ENCODE measurements at regions of chr18 and their contacts with region 1.

Region 1: GRCh38 chr18:63439334-63439733 is 17.1 kb upstream of the VPS4B start:
- DNase-seq: peak; percentile 72
- ATAC-seq: peak; percentile 78
- H3K4me3 ChIP-seq: no peak overlapping the region
- H3K4me3 Mint-ChIP-seq: no peak overlapping the region
- H3K27ac ChIP-seq: no peak overlapping the region
- H3K27ac Mint-ChIP-seq: no peak overlapping the region
- H3K4me1 ChIP-seq: peaks cover 2 to 5% of the 10 kb centered on the region in 2 donors
- H3K4me1 Mint-ChIP-seq: peaks cover 5% of the 10 kb centered on the region
- H3K27me3 ChIP-seq: no peaks in the 10 kb centered on the region
- H3K27me3 Mint-ChIP-seq: peaks cover 16% of the 10 kb centered on the region
- CTCF ChIP-seq: peak; percentile 94

Region 2: DNA sequence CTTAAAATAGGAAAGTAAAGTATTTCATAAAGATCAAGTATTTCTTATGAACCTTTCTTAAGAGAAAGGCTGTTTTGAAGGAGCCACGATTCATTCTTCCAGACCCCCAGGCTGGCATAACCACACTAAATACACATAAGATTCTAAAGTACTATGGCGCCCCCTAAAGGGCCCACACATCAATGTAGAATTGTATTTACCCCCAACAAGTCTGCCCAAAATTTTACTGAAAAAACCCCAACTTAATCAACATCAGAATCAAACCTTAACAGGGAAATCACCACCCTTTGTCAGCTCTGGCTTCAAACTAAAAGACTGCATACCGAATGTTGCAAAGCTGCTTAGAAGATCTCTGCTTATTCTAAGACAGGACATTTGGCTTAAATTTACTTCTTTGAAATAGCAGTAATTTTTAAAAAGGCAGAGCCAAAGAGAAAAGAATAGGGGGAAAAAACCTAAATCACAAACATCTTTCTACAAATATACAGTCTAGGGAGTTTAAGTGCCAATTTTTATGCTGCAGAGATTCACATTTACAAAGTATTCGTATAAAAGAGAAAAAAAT is 99.3 kb before region 1 on chr18:
- CTCF ChIA-PET with region 1: interaction called, 90 read pairs
- POLR2A ChIA-PET with region 1: no interaction called
- intact Hi-C with region 1: loop called (anchors 1 kb)
- DNase-seq: peak; percentile 62
- ATAC-seq: peak; percentile 33
- H3K4me3 ChIP-seq: no peak overlapping the region
- H3K4me3 Mint-ChIP-seq: no peak overlapping the region
- H3K27ac ChIP-seq: no peak overlapping the region
- H3K27ac Mint-ChIP-seq: no peak overlapping the region
- H3K4me1 ChIP-seq: no peaks in the 10 kb centered on the region
- H3K4me1 Mint-ChIP-seq: no peaks in the 10 kb centered on the region
- H3K27me3 ChIP-seq: no peaks in the 10 kb centered on the region
- H3K27me3 Mint-ChIP-seq: no peaks in the 10 kb centered on the region
- CTCF ChIP-seq: peak; percentile 75

Measured in B cell (primary cell).